ENCODE measurements at regions of chr5 and their contacts with region 1.

Region 1: DNA sequence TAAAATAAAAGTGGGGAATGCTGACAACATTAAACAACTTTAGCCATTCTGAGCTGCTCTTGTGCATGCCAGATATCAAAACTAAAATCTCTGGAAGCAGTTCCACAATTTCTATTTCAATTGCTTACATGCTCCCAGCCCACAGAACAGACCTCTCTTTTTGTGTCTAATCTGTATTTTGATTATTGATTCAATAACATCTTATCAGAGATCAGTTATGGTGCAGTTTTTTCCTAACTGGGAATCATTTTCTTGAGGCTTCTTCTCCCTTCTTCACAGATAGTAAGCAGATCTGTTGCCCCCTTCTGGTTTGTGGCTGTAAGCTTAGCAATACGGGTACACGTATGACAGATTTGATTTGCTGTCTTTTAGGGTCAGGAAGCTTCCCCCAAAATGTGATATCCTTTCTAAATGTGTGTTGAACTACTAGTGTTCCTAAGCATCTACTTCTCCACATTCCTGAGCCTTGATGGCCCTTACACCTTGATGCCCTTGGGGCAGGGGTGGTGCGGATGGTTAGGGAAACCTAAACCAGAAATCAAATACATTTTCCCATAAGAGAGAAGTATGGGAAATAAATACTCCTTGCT is 39.4 kb downstream of the MRPS27 start:
- DNase-seq: no peak
- H3K4me3 ChIP-seq: no peak overlapping the region
- CTCF ChIP-seq: peak; percentile 63

Region 2: DNA sequence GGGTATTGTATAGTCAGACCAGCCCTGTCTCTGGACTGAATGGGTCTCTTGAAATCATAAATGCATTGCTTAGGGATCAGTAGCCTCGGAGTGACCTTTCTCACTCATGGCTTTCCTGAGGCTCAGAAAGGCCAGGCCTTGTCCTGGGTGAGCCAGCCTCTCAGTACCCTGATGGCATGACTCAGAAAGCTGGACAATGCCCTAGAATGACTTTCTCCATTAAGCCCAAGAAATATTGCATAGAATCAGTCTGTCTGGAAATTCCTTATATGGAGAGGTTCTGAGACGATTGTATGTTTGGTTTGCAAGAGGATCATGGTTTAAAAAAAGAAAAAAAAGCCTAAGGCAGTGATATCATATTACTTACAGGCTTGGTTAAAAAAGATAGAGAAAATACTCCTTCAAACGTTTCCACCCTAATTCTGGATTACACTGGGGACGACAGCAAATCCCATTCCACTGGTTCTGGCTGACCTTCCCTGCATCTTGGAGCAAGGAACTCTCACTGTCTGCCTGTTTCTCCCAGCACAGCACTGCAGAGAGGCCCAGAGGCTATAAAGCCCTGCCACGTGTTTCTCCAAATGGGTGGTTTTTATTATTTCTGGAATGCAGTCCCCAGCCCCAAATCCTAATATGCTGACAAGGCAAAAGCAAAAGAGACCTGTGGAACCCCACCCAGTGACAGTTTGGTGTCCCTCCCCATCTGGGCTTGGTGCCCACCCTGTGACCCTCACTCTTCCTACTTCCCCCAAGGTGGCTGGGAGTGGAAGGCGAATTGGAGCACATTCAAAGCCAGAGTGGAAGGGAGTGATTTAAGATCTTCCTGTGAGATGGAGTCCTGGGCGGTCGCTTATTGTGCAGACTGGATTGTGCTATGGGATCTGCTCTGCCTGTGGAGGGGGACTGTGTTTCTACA is 139.0 kb before region 1 on chr5:
- CTCF ChIA-PET with region 1: interaction called, 10 read pairs
- POLR2A ChIA-PET with region 1: no interaction called
- DNase-seq: peak; percentile 89
- H3K4me3 ChIP-seq: no peak overlapping the region
- CTCF ChIP-seq: no peak

Region 3: GRCh38 chr5:72149742-72150141 is 130.9 kb before region 1 on chr5:
- CTCF ChIA-PET with region 1: interaction called, 13 read pairs
- POLR2A ChIA-PET with region 1: no interaction called
- DNase-seq: no peak
- H3K4me3 ChIP-seq: no peak overlapping the region
- CTCF ChIP-seq: peak; percentile 17

Measured in AG04449 (cell line).